Posterior cingulate gyrus (tissue), 11 donors: ENCODE measurements at regions of chr16 and their contacts with region 1.

Region 1: DNA sequence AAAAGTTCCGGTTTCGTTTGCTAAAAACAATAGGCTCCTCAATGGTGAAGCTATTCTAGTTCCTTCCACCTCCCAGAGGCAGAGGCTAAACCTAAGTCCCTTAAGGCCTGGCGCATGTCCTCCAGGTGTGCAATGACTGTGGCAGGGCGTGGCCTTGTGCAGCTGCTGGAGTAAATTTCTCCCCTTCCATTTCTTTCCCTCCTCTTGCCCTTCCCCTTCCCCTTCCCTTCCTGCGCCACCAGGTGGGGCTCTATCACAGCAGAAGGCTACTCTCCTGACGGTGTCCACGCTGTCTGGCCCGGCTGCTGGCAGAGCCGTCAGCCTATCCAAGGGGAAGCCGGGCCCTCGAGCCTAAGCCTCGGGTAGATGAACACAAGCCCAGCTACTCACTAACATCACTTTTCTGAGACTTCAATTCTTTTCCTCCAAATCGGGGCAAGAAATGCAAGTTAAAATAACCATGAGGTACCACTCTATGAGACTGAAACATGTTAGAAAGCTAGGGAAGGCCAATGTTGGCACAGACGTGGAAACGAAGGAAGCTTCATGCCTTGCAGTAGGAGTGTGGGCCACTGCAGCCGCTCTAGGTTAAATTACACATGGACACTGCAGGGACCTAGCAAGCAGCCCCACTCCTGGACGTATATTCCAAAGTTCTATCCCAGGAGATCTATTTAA is 34.4 kb downstream of the C16orf78 start:
- DNase-seq: peak; percentile 68 to 97 (median 87)

Region 2: DNA sequence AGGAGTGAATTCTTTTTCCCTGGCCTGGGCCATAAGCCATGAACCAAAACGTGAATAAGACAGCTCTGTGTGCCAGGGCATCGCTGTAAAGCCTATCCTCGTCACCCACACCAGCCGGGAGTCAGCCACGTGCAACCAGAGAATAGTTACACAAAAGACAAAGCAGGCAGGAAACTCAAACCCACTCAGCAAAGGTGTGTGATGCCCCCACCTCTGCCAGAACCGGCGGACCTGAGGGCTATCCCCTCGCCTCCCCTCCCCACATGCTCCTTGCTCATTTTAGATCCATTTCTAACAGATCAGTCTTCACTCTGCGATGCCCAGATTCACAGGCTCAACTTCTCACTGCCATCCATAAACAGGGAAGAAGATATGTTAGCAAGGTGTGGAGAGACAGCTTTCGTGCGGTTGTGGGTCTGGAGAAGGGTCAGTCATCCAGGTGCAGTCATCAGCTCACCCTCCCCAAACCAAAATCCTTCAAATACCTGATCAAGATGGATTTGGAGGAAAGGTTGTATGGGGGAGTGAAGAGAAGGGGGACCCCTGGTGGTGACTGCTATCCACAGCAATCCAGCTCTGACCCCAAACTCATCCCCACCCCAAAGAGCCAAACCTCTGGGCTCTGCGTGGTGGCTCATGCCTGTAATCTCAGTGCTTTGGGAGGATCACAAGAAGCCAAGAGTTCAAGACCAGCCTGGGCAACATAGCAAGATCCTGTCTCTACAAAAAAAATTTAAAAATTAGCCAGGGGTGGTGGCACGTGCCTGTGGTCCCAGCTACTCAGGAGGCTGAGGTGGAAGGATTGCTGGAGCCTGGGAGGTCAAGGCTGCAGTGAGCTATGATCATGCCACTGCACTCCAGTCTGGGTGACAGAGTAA is 184.8 kb after region 1 on chr16:
- intact Hi-C with region 1: loop called (anchors 1 kb)
- DNase-seq: peak in 4 of 10 donors; percentile 15 to 35 (median 26)

Region 3: DNA sequence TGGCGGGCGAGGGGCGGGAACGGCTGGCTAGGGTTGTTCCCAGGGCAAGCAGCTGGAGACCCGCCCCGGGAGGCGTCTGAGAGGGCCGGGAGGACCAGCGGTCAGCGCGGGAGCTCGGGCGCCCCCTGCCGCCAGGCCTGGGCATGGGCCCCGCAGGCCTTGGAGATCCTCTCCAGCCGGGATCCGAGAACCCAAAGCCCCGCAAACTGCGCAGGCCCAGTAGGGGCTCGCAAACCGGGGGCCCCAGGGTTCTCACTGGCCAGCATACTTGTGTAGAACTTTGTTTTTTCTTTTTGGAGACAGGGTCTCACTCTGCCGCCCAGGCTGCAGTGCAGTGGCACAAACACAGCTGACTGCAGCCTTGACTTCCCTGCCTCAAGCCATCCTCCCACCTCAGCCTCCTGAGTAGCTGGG is 468.7 kb after region 1 on chr16:
- intact Hi-C with region 1: loop called (anchors 10 kb)
- DNase-seq: peak in 5 of 10 donors; percentile 20 to 86 (median 78)

Region 4: GRCh38 chr16:49921791-49922456 is 513.9 kb after region 1 on chr16:
- intact Hi-C with region 1: loop called (anchors 5 kb)
- DNase-seq: peak in 9 of 10 donors; percentile 37 to 91 (median 61)